ENCODE measurements at regions of chr15 and their contacts with region 1.

Region 1: DNA sequence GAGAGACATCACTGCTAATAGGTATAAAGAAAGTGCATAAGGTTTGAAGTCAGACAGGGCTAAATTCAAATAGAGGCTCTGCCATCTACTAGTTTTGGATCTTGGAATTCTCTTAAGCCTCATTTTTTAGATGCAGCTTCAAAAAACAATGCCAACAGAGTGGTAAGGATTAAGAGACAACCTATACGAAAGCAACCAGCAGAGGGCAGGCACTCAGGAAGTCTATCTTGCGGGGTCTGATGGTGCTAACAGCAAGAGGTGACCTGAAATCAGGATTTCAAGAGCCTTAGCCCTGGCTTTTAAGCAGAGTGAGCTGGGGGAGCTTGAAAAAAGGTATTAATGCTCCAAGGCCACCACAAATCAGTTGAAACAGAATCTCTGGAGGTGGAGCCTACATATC is 40.7 kb downstream of the LDHAL6B start:
- DNase-seq: peak; percentile 42 to 73
- ATAC-seq: peak; percentile 73 to 93 (median 90)
- H3K4me3 ChIP-seq: no peak overlapping the region
- H3K4me3 Mint-ChIP-seq: peak overlapping the region; percentile 6
- H3K27ac ChIP-seq: no peak overlapping the region
- H3K27ac Mint-ChIP-seq: no peak overlapping the region
- H3K4me1 ChIP-seq: peaks cover 12% of the 10 kb centered on the region
- H3K4me1 Mint-ChIP-seq: peaks cover 6 to 13% of the 10 kb centered on the region in 2 donors
- H3K27me3 ChIP-seq: no peaks in the 10 kb centered on the region
- H3K27me3 Mint-ChIP-seq: no peaks in the 10 kb centered on the region
- CTCF ChIP-seq: peak; percentile 72

Region 2: GRCh38 chr15:58608129-58608590 is 639.2 kb before region 1 on chr15:
- intact Hi-C with region 1: no loop called
- DNase-seq: peak in 1 of 2 donors; percentile 60
- ATAC-seq: peak; percentile 73 to 83 (median 77)
- H3K4me3 ChIP-seq: no peak overlapping the region
- H3K4me3 Mint-ChIP-seq: peak overlapping the region; percentile 82
- H3K27ac ChIP-seq: peak overlapping the region; percentile 45
- H3K27ac Mint-ChIP-seq: peak overlapping the region; percentile 89 to 90
- H3K4me1 ChIP-seq: peaks cover 13% of the 10 kb centered on the region
- H3K4me1 Mint-ChIP-seq: peaks cover 60 to 63% of the 10 kb centered on the region in 2 donors
- H3K27me3 ChIP-seq: no peaks in the 10 kb centered on the region
- H3K27me3 Mint-ChIP-seq: no peaks in the 10 kb centered on the region
- CTCF ChIP-seq: no peak

Region 3: DNA sequence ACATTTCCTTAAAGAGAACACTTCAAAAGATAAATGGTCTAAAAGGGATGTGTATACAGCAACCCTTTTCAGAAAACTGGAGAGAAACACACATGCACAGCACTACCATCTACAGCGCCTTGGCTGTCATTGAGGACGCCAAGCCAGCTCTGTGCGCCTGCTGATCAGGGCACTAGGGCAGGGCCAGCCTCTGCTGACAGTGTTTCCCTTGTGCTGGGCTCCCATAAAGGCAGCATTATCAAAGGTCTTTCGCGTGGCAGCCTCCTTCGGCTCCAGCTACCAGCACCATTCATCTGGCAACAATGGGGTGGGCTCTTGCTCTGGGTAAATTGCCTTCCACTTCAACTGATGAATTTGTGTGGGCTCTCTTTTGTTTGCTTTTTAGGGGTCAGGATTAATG is 12.7 kb after region 1 on chr15:
- intact Hi-C with region 1: no loop called
- DNase-seq: no peak
- ATAC-seq: no peak
- H3K4me3 ChIP-seq: no peak overlapping the region
- H3K4me3 Mint-ChIP-seq: no peak overlapping the region
- H3K27ac ChIP-seq: no peak overlapping the region
- H3K27ac Mint-ChIP-seq: no peak overlapping the region
- H3K4me1 ChIP-seq: no peaks in the 10 kb centered on the region
- H3K4me1 Mint-ChIP-seq: peaks cover 19 to 21% of the 10 kb centered on the region in 2 donors
- H3K27me3 ChIP-seq: no peaks in the 10 kb centered on the region
- H3K27me3 Mint-ChIP-seq: peaks cover 0 to 3% of the 10 kb centered on the region in 2 donors
- CTCF ChIP-seq: no peak

Region 4: GRCh38 chr15:59299929-59300617 is 52.7 kb after region 1 on chr15:
- intact Hi-C with region 1: loop called (anchors 2 kb)
- DNase-seq: peak; percentile 60 to 82
- ATAC-seq: peak; percentile 95 to 99 (median 98)
- H3K4me3 ChIP-seq: peak overlapping the region; percentile 10
- H3K4me3 Mint-ChIP-seq: peak overlapping the region; percentile 89
- H3K27ac ChIP-seq: peak overlapping the region; percentile 79
- H3K27ac Mint-ChIP-seq: peak overlapping the region; percentile 92 to 93
- H3K4me1 ChIP-seq: peaks cover 40% of the 10 kb centered on the region
- H3K4me1 Mint-ChIP-seq: peaks cover 41 to 50% of the 10 kb centered on the region in 2 donors
- H3K27me3 ChIP-seq: no peaks in the 10 kb centered on the region
- H3K27me3 Mint-ChIP-seq: no peaks in the 10 kb centered on the region
- CTCF ChIP-seq: no peak

Region 5: GRCh38 chr15:59410391-59410896 is 163.1 kb after region 1 on chr15:
- intact Hi-C with region 1: loop called (anchors 1 kb)
- DNase-seq: no peak
- ATAC-seq: no peak
- H3K4me3 ChIP-seq: no peak overlapping the region
- H3K4me3 Mint-ChIP-seq: peak overlapping the region; percentile 2
- H3K27ac ChIP-seq: no peak overlapping the region
- H3K27ac Mint-ChIP-seq: no peak overlapping the region
- H3K4me1 ChIP-seq: peaks cover 62% of the 10 kb centered on the region
- H3K4me1 Mint-ChIP-seq: peaks cover 42 to 50% of the 10 kb centered on the region in 2 donors
- H3K27me3 ChIP-seq: peaks cover 8% of the 10 kb centered on the region
- H3K27me3 Mint-ChIP-seq: peaks cover 14 to 23% of the 10 kb centered on the region in 2 donors
- CTCF ChIP-seq: no peak

Measured in natural killer cell (primary cell).